ENCODE measurements at regions of chr19 and their contacts with region 1.

Region 1: GRCh38 chr19:55516878-55517620 is 19.9 kb downstream of the SBK2 start:
- DNase-seq: peak; percentile 85 to 86 (median 86)
- H3K4me3 ChIP-seq: peak overlapping the region in 1 of 2 donors; percentile 38
- H3K4me3 Mint-ChIP-seq: peak overlapping the region; percentile 71 to 86 (median 82)
- H3K27ac ChIP-seq: peak overlapping the region; percentile 42
- H3K27ac Mint-ChIP-seq: peak overlapping the region; percentile 77 to 97 (median 92)
- H3K4me1 ChIP-seq: peaks cover 6% of the 10 kb centered on the region
- H3K4me1 Mint-ChIP-seq: peaks cover 3 to 4% (median 3%) of the 10 kb centered on the region in 4 donors
- H3K27me3 ChIP-seq: no peaks in the 10 kb centered on the region
- H3K27me3 Mint-ChIP-seq: peaks cover 1 to 11% of the 10 kb centered on the region in 2 donors

Region 2: GRCh38 chr19:55341171-55341588 is 175.9 kb before region 1 on chr19:
- CTCF ChIA-PET with region 1: no interaction called
- POLR2A ChIA-PET with region 1: no interaction called
- intact Hi-C with region 1: no loop called
- DNase-seq: peak; percentile 15 to 56 (median 24)
- H3K4me3 ChIP-seq: peak overlapping the region in 1 of 2 donors; percentile 67
- H3K4me3 Mint-ChIP-seq: peak overlapping the region; percentile 74 to 87 (median 80)
- H3K27ac ChIP-seq: peak overlapping the region; percentile 82
- H3K27ac Mint-ChIP-seq: peak overlapping the region; percentile 76 to 97 (median 92)
- H3K4me1 ChIP-seq: peaks cover 24% of the 10 kb centered on the region
- H3K4me1 Mint-ChIP-seq: peaks cover 9 to 35% (median 18%) of the 10 kb centered on the region in 4 donors
- H3K27me3 ChIP-seq: no peaks in the 10 kb centered on the region
- H3K27me3 Mint-ChIP-seq: peaks cover 1 to 12% of the 10 kb centered on the region in 2 donors

Region 3: DNA sequence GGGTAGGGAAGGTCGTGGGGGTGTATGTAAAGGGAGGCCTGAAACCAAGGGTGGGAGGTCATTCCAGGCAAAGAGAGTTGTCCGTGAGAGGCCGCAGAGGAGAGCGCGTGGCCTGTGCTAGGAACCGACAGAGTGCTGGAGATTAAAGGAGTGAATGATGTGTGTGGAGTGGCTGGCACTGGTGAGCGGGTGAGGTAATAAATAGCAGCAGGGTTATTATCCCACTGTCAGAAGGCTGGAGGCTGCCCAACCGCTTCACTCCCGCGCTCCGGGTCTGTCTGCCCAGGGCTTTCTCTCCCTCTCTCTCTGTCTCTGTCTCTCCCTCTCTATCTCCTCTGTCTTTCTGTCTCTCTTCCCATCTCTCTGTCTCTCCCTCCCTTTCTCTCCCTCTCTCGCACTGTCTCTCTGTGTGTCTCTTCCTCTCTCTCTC is 46.2 kb after region 1 on chr19:
- CTCF ChIA-PET with region 1: no interaction called
- POLR2A ChIA-PET with region 1: no interaction called
- intact Hi-C with region 1: no loop called
- DNase-seq: no peak
- H3K4me3 ChIP-seq: no peak overlapping the region
- H3K4me3 Mint-ChIP-seq: peak overlapping the region in 1 of 8 donors; percentile 27
- H3K27ac ChIP-seq: no peak overlapping the region
- H3K27ac Mint-ChIP-seq: no peak overlapping the region
- H3K4me1 ChIP-seq: no peaks in the 10 kb centered on the region
- H3K4me1 Mint-ChIP-seq: peaks cover 0 to 1% (median 0%) of the 10 kb centered on the region in 4 donors
- H3K27me3 ChIP-seq: no peaks in the 10 kb centered on the region
- H3K27me3 Mint-ChIP-seq: peaks cover 11 to 12% of the 10 kb centered on the region in 2 donors

Region 4: GRCh38 chr19:55580628-55581144 is 63.6 kb after region 1 on chr19 and contains the start of gene ZNF579:
- CTCF ChIA-PET with region 1: interaction called, 3 read pairs
- POLR2A ChIA-PET with region 1: no interaction called
- intact Hi-C with region 1: loop called (anchors 2 kb)
- DNase-seq: peak; percentile 58 to 78 (median 63)
- H3K4me3 ChIP-seq: peak within 1 kb of the TSS; percentile 61 to 68
- H3K4me3 Mint-ChIP-seq: peak within 1 kb of the TSS; percentile 81 to 97 (median 88)
- H3K27ac ChIP-seq: peak within 1 kb of the TSS; percentile 69
- H3K27ac Mint-ChIP-seq: peak within 1 kb of the TSS; percentile 86 to 95 (median 93)
- H3K4me1 ChIP-seq: peaks cover 21% of the 10 kb centered on the region
- H3K4me1 Mint-ChIP-seq: peaks cover 22 to 38% (median 25%) of the 10 kb centered on the region in 4 donors
- H3K27me3 ChIP-seq: no peaks in the 10 kb centered on the region
- H3K27me3 Mint-ChIP-seq: peaks cover 0 to 1% of the 10 kb centered on the region in 2 donors
- total RNA-seq, gene ZNF579: 8.0 to 9.6 TPM